Activated CD4-positive, alpha-beta T cell treated with anti-CD3 and anti-CD28 coated beads, Interleukin-2, amount 10 ng/mL, durations not matched to agents 24 days and 14 days (primary cell): ENCODE measurements at regions of chr13 and their contacts with region 1.

Region 1: DNA sequence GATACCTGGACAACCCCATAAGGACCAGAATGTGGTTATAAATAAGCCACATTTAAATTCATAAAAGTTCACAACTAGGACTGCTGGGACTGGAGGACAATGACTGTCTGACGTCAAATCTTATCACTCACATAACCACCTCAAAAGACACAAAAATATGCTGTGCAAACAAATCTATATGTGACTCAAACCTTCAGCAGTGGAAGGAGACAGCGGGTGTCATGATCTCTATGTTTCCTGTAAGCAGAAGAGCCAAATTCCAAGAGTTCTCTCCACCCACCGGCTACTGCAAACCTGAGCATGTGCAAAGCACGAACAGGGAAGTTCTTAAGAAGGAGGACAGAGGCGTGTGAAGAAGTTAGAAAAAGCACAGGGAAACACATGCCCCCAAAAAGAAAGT is 113.2 kb downstream of the MYCBP2 start:
- DNase-seq: no peak
- H3K4me3 Mint-ChIP-seq: no peak overlapping the region
- H3K27ac Mint-ChIP-seq: peak overlapping the region; percentile 31
- H3K4me1 Mint-ChIP-seq: peaks cover 4% of the 10 kb centered on the region
- H3K27me3 Mint-ChIP-seq: no peaks in the 10 kb centered on the region

Region 2: DNA sequence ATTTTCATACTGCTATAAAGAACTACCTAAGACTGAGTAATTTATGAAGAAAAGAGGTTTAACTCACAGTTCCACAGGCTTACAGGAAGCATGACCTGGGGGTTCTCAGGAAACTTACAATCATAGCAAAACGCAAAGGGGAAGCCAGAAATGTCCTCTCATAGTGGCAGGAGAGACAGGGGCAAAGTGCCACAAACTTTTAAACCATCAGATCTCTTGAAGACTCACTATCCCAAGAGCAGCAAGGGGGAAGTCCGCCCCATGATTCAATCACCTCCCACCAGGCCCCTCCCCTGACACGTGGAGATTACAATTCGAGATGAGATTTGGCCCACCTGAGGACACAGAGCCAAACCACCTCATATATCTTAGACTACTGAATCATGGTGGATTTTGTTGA is 526.2 kb before region 1 on chr13:
- intact Hi-C with region 1: no loop called
- DNase-seq: no peak
- H3K4me3 Mint-ChIP-seq: no peak overlapping the region
- H3K27ac Mint-ChIP-seq: no peak overlapping the region
- H3K4me1 Mint-ChIP-seq: no peaks in the 10 kb centered on the region
- H3K27me3 Mint-ChIP-seq: peaks cover 2% of the 10 kb centered on the region

Region 3: DNA sequence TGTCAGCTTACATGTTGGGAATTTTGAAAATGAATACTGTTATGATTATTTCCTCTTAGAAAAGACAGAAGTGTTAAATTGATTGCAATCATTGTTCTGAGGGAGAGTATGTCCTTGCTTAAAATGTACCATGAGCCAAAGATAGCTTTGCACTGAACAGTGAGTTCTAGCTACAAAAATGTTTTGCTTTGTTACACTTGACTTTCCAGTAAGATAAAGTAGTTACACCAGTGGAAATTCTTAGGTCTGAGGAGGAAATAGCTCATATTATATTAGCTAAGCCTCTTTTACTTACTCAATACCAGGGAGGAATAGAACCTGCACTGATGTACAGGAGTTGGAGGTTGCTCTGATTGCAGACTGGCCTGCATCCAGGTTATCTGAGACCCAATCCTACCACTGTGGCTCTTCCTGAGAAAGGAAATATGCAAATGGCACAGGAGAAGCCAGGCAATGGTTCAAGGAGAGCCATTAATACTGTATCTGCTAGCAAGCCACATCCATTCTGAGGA is 133.7 kb before region 1 on chr13:
- intact Hi-C with region 1: no loop called
- DNase-seq: no peak
- H3K4me3 Mint-ChIP-seq: no peak overlapping the region
- H3K27ac Mint-ChIP-seq: no peak overlapping the region
- H3K4me1 Mint-ChIP-seq: peaks cover 2% of the 10 kb centered on the region
- H3K27me3 Mint-ChIP-seq: no peaks in the 10 kb centered on the region

Region 4: DNA sequence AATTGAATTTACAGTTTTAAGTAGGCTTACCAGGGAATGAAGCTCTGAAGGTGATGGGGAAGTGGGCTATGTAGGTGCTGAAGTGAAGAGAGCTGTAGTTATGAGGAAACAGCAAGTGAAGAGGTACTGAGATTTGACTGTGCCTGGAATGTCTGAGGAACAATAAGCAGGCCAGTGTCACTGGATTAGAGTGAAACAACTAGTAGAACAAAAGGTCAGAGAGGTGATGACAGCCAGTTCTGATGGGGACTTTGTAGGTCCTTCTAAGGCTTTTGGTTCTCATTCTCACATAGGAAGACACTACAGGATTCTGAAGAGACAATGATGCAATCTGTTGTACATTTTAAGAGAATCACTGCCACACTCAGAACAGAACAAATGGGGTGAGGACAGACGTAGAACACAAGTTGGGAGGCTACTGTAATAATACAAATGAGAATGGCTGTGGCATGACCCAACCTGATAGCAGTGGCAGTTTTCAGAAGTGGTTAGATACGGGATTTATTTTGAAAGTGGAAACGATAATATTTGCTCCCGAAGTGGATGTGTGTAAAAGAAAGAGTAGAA is 17.5 kb before region 1 on chr13:
- intact Hi-C with region 1: no loop called
- DNase-seq: no peak
- H3K4me3 Mint-ChIP-seq: no peak overlapping the region
- H3K27ac Mint-ChIP-seq: no peak overlapping the region
- H3K4me1 Mint-ChIP-seq: no peaks in the 10 kb centered on the region
- H3K27me3 Mint-ChIP-seq: no peaks in the 10 kb centered on the region

Region 5: DNA sequence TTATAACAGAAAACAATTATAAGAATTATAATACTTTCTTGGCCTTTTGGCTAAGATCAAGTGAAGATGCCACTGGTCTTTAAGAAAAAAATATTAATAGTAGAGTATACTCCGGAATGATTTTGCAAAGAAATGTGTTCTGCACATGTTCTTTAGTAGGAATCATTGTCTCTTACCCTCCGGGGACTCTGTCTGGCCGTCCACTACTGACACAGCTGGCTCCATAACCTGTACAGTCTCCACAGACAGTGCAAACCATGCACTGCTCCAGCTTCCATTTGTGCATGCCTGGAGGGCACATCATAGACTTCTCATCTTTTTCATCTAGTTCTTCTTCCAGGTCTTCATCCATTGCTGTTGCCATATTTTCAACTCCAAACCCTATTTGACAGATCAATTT is 37.3 kb after region 1 on chr13:
- intact Hi-C with region 1: loop called (anchors 5 kb)
- DNase-seq: no peak
- H3K4me3 Mint-ChIP-seq: no peak overlapping the region
- H3K27ac Mint-ChIP-seq: no peak overlapping the region
- H3K4me1 Mint-ChIP-seq: peaks cover 8% of the 10 kb centered on the region
- H3K27me3 Mint-ChIP-seq: no peaks in the 10 kb centered on the region

Region 6: GRCh38 chr13:78907006-78907405 is 1693.4 kb after region 1 on chr13:
- intact Hi-C with region 1: no loop called
- DNase-seq: no peak
- H3K4me3 Mint-ChIP-seq: no peak overlapping the region
- H3K27ac Mint-ChIP-seq: no peak overlapping the region
- H3K4me1 Mint-ChIP-seq: no peaks in the 10 kb centered on the region
- H3K27me3 Mint-ChIP-seq: no peaks in the 10 kb centered on the region